Panc1 (cell line): ENCODE measurements at regions of chr9 and their contacts with region 1.

Region 1: DNA sequence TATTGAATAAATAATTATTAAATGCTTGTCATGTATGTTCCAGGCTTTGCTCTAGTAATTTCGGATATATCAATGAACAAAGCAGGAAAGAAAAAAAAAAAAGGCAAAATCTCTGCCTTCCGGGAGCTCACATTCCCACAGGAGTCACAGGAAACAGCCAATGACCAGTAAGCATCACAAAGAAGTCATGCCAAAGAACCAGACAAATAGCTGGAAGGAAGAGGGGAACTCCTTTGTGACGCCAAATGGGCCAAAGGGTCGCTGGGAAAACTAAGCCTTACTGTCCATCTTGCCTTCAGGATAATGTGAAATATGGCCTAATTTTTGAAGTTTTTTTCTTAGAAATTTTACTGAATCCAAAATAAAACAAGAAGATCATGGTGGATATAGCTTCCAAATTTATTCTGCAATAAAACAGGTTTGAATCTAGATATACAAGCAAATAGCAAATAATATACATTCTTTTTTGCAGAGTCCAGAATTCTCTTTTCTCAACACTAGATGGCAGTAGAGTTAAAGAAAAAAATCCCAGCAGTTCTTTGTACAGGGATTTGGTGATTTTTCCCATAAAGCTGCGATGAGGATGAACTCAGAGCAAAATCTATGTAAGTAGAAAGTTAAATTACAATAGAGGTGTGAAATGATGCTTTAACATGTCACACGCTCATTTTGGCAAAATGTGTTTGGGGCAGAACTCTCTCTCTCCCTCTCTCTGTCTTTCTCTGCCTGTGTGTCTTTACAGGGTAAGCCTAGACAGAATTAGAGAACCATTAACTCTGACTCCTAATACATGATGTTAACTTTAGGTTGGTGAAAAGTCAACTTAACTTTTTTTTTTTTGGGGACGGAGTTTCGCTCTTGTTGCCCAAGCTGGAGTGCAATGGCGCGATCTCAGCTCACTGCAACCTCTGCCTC is 60.0 kb upstream of the TUT7 start:
- DNase-seq: no peak
- ATAC-seq: 0 out of 2 replicates have a peak, but pooled peaks have one; percentile 51
- H3K4me3 ChIP-seq: no peak overlapping the region
- H3K27ac ChIP-seq: no peak overlapping the region
- H3K4me1 ChIP-seq: no peaks in the 10 kb centered on the region
- H3K27me3 ChIP-seq: no peaks in the 10 kb centered on the region
- CTCF ChIP-seq: peak; percentile 65; the same call in 1 of the 2 replicates

Region 2: GRCh38 chr9:85859765-85860164 is 554.5 kb before region 1 on chr9:
- CTCF ChIA-PET with region 1: no interaction called
- POLR2A ChIA-PET with region 1: interaction called, 16 read pairs
- in situ Hi-C with region 1: no loop called
- intact Hi-C with region 1: no loop called
- DNase-seq: no peak
- ATAC-seq: no peak
- H3K4me3 ChIP-seq: no peak overlapping the region
- H3K27ac ChIP-seq: no peak overlapping the region
- H3K4me1 ChIP-seq: no peaks in the 10 kb centered on the region
- H3K27me3 ChIP-seq: no peaks in the 10 kb centered on the region
- CTCF ChIP-seq: no peak

Region 3: GRCh38 chr9:86238861-86239770 is 175.1 kb before region 1 on chr9:
- CTCF ChIA-PET with region 1: no interaction called
- POLR2A ChIA-PET with region 1: no interaction called
- in situ Hi-C with region 1: no loop called
- intact Hi-C with region 1: no loop called
- DNase-seq: no peak
- ATAC-seq: no peak
- H3K4me3 ChIP-seq: no peak overlapping the region
- H3K27ac ChIP-seq: no peak overlapping the region
- H3K4me1 ChIP-seq: no peaks in the 10 kb centered on the region
- H3K27me3 ChIP-seq: no peaks in the 10 kb centered on the region
- CTCF ChIP-seq: no peak

Region 4: GRCh38 chr9:86376016-86376415 is 38.2 kb before region 1 on chr9:
- CTCF ChIA-PET with region 1: no interaction called
- POLR2A ChIA-PET with region 1: no interaction called
- in situ Hi-C with region 1: no loop called
- intact Hi-C with region 1: no loop called
- DNase-seq: no peak
- ATAC-seq: no peak
- H3K4me3 ChIP-seq: no peak overlapping the region
- H3K27ac ChIP-seq: no peak overlapping the region
- H3K4me1 ChIP-seq: no peaks in the 10 kb centered on the region
- H3K27me3 ChIP-seq: no peaks in the 10 kb centered on the region
- CTCF ChIP-seq: no peak

Region 5: DNA sequence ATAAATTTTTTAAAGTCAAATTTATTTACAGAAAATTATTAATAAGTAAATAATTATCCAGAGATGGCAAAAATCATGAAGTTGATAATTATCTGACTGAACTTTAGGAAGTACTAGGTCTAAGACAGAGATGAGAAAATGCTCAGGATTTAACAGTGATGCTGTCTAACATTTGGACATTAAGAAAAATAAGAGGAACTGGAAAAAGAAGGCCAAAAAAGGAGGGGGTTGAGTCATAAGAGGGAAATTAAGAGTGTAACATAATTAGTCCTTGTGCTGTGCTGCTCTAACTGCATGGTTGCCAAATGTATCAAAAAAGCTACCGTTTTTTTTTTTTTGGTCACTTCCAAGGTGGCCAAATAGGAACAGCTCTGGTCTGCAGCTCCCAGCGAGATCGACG is 24.6 kb before region 1 on chr9:
- CTCF ChIA-PET with region 1: no interaction called
- POLR2A ChIA-PET with region 1: no interaction called
- in situ Hi-C with region 1: no loop called
- intact Hi-C with region 1: no loop called
- DNase-seq: no peak
- ATAC-seq: no peak
- H3K4me3 ChIP-seq: no peak overlapping the region
- H3K27ac ChIP-seq: no peak overlapping the region
- H3K4me1 ChIP-seq: no peaks in the 10 kb centered on the region
- H3K27me3 ChIP-seq: no peaks in the 10 kb centered on the region
- CTCF ChIP-seq: no peak

Region 6: DNA sequence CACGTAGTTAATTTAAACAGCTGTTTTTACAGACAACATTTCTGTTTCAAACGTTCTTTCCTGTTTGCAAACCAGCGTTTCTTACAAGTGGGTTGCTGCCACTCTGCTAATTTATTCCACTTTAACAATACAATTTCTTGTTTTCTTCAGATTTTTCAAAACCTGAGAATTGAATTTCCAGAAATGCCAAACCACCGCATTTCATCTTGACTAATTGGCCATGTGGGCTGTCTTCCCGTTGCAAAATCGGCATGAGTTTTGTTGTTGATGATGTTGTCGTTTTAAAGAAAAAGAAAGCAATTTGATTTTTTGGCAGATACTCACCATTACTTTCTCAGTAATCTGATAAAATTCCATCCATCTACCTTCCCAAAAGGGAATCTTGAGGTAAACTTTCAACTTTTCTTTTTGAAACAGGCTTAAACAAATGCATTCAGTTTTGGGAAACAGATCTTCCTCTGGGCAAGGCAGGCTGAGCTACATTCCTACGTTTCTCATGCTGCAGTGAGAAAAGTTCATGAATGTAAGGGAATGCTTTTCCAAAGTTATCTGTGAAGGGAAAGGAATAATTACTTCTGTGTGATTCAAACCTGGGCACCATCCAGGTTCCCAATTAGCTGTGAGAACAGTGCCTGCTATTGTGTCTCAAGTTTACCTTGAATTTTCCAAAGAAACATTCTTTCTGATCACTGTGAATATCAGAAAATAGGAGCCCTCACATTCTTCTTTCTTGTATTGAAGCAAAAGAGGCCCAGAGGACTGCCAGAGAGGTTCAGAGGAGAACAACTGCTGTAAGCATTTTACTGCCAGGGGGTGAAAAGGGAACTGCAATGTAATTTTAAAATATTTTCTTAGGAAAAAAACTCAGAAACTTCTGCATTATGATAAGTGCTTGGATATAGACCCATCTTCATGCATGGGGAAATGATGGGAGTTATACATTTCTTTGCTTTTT is 40.7 kb after region 1 on chr9:
- CTCF ChIA-PET with region 1: no interaction called
- POLR2A ChIA-PET with region 1: no interaction called
- in situ Hi-C with region 1: no loop called
- intact Hi-C with region 1: no loop called
- DNase-seq: no peak
- ATAC-seq: no peak
- H3K4me3 ChIP-seq: no peak overlapping the region
- H3K27ac ChIP-seq: no peak overlapping the region
- H3K4me1 ChIP-seq: no peaks in the 10 kb centered on the region
- H3K27me3 ChIP-seq: no peaks in the 10 kb centered on the region
- CTCF ChIP-seq: no peak